Natural killer cell (primary cell): ENCODE measurements at regions of chr5 and their contacts with region 1.

Region 1: GRCh38 chr5:65562731-65563701 is at the starts of genes CENPK and PPWD1:
- DNase-seq: peak; percentile 93 to 98
- ATAC-seq: peak; percentile 97 to 99 (median 98)
- H3K4me3 ChIP-seq: peak within 1 kb of the TSS; percentile 60
- H3K4me3 Mint-ChIP-seq: peak within 1 kb of the TSS; percentile 100
- H3K27ac ChIP-seq: peak within 1 kb of the TSS; percentile 88
- H3K27ac Mint-ChIP-seq: peak within 1 kb of the TSS; percentile 97 to 99
- H3K4me1 ChIP-seq: peaks cover 9% of the 10 kb centered on the region
- H3K4me1 Mint-ChIP-seq: peaks cover 39 to 40% of the 10 kb centered on the region in 2 donors
- H3K27me3 ChIP-seq: no peaks in the 10 kb centered on the region
- H3K27me3 Mint-ChIP-seq: no peaks in the 10 kb centered on the region
- CTCF ChIP-seq: no peak
- total RNA-seq, gene CENPK: 22.0 to 32.0 (median 26.1) TPM
- total RNA-seq, gene PPWD1: 77.0 to 91.3 (median 85.6) TPM

Region 2: DNA sequence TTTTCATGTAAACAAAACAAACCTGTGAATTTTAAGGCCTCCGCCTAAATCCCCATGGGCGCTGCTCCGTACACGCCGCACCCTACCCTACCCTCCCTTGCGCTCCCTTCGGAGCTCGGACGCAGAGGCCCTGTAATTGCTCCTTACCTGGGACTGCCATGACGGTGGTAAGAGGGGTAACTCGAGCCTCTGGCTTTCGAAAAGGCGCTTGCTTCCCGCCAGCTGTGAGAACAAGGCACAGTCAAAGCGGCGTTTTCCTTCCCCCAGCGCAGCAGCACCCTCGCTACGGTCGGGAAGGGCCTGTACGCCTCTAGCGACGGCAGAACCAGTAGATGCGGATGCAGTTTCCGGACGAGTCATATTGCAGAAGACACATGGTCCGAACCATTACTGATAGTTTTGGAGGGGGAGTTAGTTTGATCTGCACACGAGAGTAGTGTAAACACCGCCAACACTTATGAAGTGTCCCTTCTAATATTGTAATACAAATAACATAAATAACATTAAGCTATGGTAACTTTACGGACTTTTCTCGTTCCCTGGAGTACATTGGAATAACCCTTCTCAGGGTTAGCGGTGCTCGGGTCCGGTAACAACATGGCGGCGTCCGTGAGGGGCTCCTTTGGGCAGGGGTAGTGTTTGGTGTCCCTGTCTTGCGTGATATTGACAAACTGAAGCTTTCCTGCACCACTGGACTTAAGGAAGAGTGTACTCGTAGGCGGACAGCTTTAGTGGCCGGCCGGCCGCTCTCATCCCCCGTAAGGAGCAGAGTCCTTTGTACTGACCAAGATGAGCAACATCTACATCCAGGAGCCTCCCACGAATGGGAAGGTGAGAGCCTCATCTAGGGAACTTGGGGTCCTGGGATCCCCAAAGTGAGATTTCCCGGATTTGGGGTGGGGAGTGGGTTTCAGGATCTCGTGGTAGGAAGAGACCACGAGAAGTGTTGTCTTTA is 794.4 kb before region 1 on chr5 and contains the starts of genes CWC27 and SREK1IP1:
- intact Hi-C with region 1: loop called (anchors 5 kb)
- DNase-seq: peak; percentile 71 to 92
- ATAC-seq: peak; percentile 94 to 97 (median 97)
- H3K4me3 ChIP-seq: peak within 1 kb of the TSS; percentile 96
- H3K4me3 Mint-ChIP-seq: peak within 1 kb of the TSS; percentile 98
- H3K27ac ChIP-seq: peak within 1 kb of the TSS; percentile 80
- H3K27ac Mint-ChIP-seq: peak within 1 kb of the TSS; percentile 95 to 97
- H3K4me1 ChIP-seq: peaks cover 18% of the 10 kb centered on the region
- H3K4me1 Mint-ChIP-seq: peaks cover 43 to 58% of the 10 kb centered on the region in 2 donors
- H3K27me3 ChIP-seq: no peaks in the 10 kb centered on the region
- H3K27me3 Mint-ChIP-seq: no peaks in the 10 kb centered on the region
- CTCF ChIP-seq: no peak
- total RNA-seq, gene CWC27: 21.6 to 26.3 (median 25.7) TPM
- total RNA-seq, gene SREK1IP1: 20.2 to 28.0 (median 24.4) TPM

Region 3: GRCh38 chr5:65481635-65482295 is 81.3 kb before region 1 on chr5 and contains the start of gene ADAMTS6:
- intact Hi-C with region 1: no loop called
- DNase-seq: peak; percentile 39 to 89
- ATAC-seq: peak; percentile 74 to 75 (median 74)
- H3K4me3 ChIP-seq: peak within 1 kb of the TSS; percentile 52
- H3K4me3 Mint-ChIP-seq: no peak within 1 kb of the TSS
- H3K27ac ChIP-seq: peak within 1 kb of the TSS; percentile 55
- H3K27ac Mint-ChIP-seq: peak within 1 kb of the TSS in 1 of 2 donors; percentile 89
- H3K4me1 ChIP-seq: peaks cover 13% of the 10 kb centered on the region
- H3K4me1 Mint-ChIP-seq: peaks cover 10 to 24% of the 10 kb centered on the region in 2 donors
- H3K27me3 ChIP-seq: peaks cover 13% of the 10 kb centered on the region
- H3K27me3 Mint-ChIP-seq: peaks cover 0 to 2% of the 10 kb centered on the region in 2 donors
- CTCF ChIP-seq: no peak
- total RNA-seq, gene ADAMTS6: 0.47 to 1.4 (median 1.1) TPM

Region 4: GRCh38 chr5:65624571-65625555 is 61.8 kb after region 1 on chr5 and contains the starts of genes SHLD3 and TRAPPC13:
- intact Hi-C with region 1: loop called (anchors 1 kb)
- DNase-seq: peak; percentile 77 to 95
- ATAC-seq: peak; percentile 75 to 89 (median 76)
- H3K4me3 ChIP-seq: peak within 1 kb of the TSS; percentile 60
- H3K4me3 Mint-ChIP-seq: peak within 1 kb of the TSS; percentile 94
- H3K27ac ChIP-seq: peak within 1 kb of the TSS; percentile 73
- H3K27ac Mint-ChIP-seq: peak within 1 kb of the TSS; percentile 96 to 99
- H3K4me1 ChIP-seq: peaks cover 7% of the 10 kb centered on the region
- H3K4me1 Mint-ChIP-seq: peaks cover 34 to 35% of the 10 kb centered on the region in 2 donors
- H3K27me3 ChIP-seq: no peaks in the 10 kb centered on the region
- H3K27me3 Mint-ChIP-seq: no peaks in the 10 kb centered on the region
- CTCF ChIP-seq: peak; percentile 13
- total RNA-seq, gene SHLD3: 11.0 to 16.7 (median 12.7) TPM
- total RNA-seq, gene TRAPPC13: 20.9 to 27.5 (median 25.6) TPM

Region 5: DNA sequence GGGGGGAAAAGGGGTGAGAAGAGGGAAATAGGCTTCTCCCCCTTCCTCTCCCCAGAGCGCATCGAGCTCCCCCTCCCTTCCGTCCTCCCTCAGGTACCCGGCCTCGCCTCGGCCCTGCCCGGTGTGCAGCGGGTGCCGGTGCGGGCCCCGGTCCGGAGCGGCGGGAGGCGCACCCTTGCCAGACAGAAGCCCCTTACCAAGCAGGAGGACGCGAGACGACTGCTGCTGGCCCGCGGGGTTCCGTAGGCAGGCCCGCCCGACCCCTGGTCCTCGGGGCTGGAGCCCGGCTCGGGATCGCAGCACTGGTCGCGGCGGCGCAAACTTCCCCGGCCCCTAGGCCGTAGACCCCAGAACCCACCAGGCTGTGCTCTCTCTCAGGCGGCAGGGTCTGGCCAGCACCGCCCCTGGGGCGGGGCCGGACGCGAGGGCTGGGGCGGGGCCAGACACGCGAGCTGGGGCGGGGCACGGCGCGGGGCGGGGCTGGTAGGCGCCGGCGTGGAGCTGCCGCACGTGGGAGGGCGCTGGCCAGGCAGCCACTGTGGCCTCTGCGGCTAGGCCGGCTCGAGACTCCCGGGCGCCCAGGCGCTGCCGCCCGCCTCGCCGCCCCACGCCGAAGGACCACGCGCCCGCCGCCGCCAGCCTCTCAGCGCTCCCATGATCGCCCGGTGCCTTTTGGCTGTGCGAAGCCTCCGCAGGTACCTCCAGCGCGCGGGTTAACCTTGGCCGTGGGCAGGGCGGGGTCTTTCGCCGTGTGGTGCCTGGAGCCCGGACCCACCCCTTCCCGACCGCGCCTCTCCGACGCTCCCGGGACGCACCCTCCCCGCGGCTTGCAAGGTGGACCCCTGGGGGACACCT is 158.9 kb after region 1 on chr5 and contains the starts of genes NLN and SGTB:
- intact Hi-C with region 1: loop called (anchors 5 kb)
- DNase-seq: peak; percentile 84 to 89
- ATAC-seq: peak; percentile 97 to 99 (median 98)
- H3K4me3 ChIP-seq: peak within 1 kb of the TSS; percentile 73
- H3K4me3 Mint-ChIP-seq: peak within 1 kb of the TSS; percentile 92
- H3K27ac ChIP-seq: peak within 1 kb of the TSS; percentile 52
- H3K27ac Mint-ChIP-seq: peak within 1 kb of the TSS; percentile 62 to 76
- H3K4me1 ChIP-seq: peaks cover 27% of the 10 kb centered on the region
- H3K4me1 Mint-ChIP-seq: peaks cover 17 to 18% of the 10 kb centered on the region in 2 donors
- H3K27me3 ChIP-seq: no peaks in the 10 kb centered on the region
- H3K27me3 Mint-ChIP-seq: peaks cover 6 to 12% of the 10 kb centered on the region in 2 donors
- CTCF ChIP-seq: no peak
- total RNA-seq, gene NLN: 0.86 to 2.0 (median 1.3) TPM
- total RNA-seq, gene SGTB: 6.9 to 12.0 (median 10.0) TPM